Mammary epithelial cell (primary cell): ENCODE measurements at regions of chr19 and their contacts with region 1.

Region 1: GRCh38 chr19:30669329-30670010 is 297.3 kb downstream of the ZNF536 start:
- DNase-seq: peak; percentile 62
- H3K4me3 ChIP-seq: no peak overlapping the region
- H3K27ac ChIP-seq: no peak overlapping the region
- H3K4me1 ChIP-seq: peaks cover 6% of the 10 kb centered on the region
- H3K27me3 ChIP-seq: peaks cover 1% of the 10 kb centered on the region
- CTCF ChIP-seq: peak; percentile 66 to 84

Region 2: GRCh38 chr19:30649934-30650614 is 19.4 kb before region 1 on chr19:
- CTCF ChIA-PET with region 1: no interaction called
- dilution Hi-C with region 1: no loop called
- in situ Hi-C with region 1: no loop called
- intact Hi-C with region 1: no loop called
- DNase-seq: peak; percentile 33
- H3K4me3 ChIP-seq: no peak overlapping the region
- H3K27ac ChIP-seq: no peak overlapping the region
- H3K4me1 ChIP-seq: no peaks in the 10 kb centered on the region
- H3K27me3 ChIP-seq: no peaks in the 10 kb centered on the region
- CTCF ChIP-seq: peak; percentile 76 to 81

Region 3: GRCh38 chr19:30830875-30831274 is 161.4 kb after region 1 on chr19:
- CTCF ChIA-PET with region 1: no interaction called
- dilution Hi-C with region 1: no loop called
- in situ Hi-C with region 1: no loop called
- intact Hi-C with region 1: no loop called
- DNase-seq: no peak
- H3K4me3 ChIP-seq: no peak overlapping the region
- H3K27ac ChIP-seq: no peak overlapping the region
- H3K4me1 ChIP-seq: no peaks in the 10 kb centered on the region
- H3K27me3 ChIP-seq: no peaks in the 10 kb centered on the region
- CTCF ChIP-seq: no peak

Region 4: DNA sequence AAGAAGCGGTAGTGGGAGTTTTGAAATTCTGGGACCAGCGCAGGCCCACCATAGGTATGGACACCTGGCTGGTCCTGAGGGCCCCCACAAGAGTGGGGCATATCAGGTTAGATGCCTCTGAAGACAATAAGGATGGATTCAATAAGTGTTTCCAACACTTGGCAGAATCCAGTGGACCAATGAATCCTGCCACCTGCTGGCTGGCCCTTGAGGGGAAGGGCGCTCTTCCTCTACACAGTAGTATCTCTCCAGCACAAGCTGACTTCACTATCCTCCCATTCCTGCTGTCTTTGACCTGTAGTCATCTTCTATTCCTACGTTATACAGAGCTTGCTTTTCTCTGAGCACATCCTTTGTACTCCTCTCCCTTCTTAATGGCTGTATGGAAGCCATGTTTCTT is 879.5 kb after region 1 on chr19:
- CTCF ChIA-PET with region 1: no interaction called
- dilution Hi-C with region 1: no loop called
- in situ Hi-C with region 1: no loop called
- intact Hi-C with region 1: loop called (anchors 5 kb)
- DNase-seq: peak; percentile 6
- H3K4me3 ChIP-seq: no peak overlapping the region
- H3K27ac ChIP-seq: no peak overlapping the region
- H3K4me1 ChIP-seq: no peaks in the 10 kb centered on the region
- H3K27me3 ChIP-seq: no peaks in the 10 kb centered on the region
- CTCF ChIP-seq: peak; percentile 12 to 73